ENCODE measurements at regions of chr17 and their contacts with region 1.

Region 1: GRCh38 chr17:7627250-7628121 is at the start of gene SAT2:
- DNase-seq: peak in 1 of 2 donors; percentile 98
- H3K4me3 ChIP-seq: peak within 1 kb of the TSS; percentile 83 to 98
- H3K27ac ChIP-seq: peak within 1 kb of the TSS; percentile 93
- H3K4me1 ChIP-seq: peaks cover 9% of the 10 kb centered on the region
- H3K27me3 ChIP-seq: no peaks in the 10 kb centered on the region
- CTCF ChIP-seq: no peak
- POLR2A ChIP-seq: peak in 1 of 2 donors; percentile 77
- total RNA-seq, gene SAT2: 69.7 TPM

Region 2: GRCh38 chr17:7687908-7688807 is 60.7 kb after region 1 on chr17 and contains the start of gene WRAP53:
- intact Hi-C with region 1: loop called (anchors 2 kb)
- DNase-seq: peak in 1 of 2 donors; percentile 99
- H3K4me3 ChIP-seq: peak within 1 kb of the TSS; percentile 73 to 83
- H3K27ac ChIP-seq: peak within 1 kb of the TSS; percentile 95
- H3K4me1 ChIP-seq: peaks cover 36% of the 10 kb centered on the region
- H3K27me3 ChIP-seq: no peaks in the 10 kb centered on the region
- CTCF ChIP-seq: peak; percentile 92 to 98 (median 92)
- POLR2A ChIP-seq: no peak
- total RNA-seq, gene WRAP53: 7.6 TPM

Region 3: DNA sequence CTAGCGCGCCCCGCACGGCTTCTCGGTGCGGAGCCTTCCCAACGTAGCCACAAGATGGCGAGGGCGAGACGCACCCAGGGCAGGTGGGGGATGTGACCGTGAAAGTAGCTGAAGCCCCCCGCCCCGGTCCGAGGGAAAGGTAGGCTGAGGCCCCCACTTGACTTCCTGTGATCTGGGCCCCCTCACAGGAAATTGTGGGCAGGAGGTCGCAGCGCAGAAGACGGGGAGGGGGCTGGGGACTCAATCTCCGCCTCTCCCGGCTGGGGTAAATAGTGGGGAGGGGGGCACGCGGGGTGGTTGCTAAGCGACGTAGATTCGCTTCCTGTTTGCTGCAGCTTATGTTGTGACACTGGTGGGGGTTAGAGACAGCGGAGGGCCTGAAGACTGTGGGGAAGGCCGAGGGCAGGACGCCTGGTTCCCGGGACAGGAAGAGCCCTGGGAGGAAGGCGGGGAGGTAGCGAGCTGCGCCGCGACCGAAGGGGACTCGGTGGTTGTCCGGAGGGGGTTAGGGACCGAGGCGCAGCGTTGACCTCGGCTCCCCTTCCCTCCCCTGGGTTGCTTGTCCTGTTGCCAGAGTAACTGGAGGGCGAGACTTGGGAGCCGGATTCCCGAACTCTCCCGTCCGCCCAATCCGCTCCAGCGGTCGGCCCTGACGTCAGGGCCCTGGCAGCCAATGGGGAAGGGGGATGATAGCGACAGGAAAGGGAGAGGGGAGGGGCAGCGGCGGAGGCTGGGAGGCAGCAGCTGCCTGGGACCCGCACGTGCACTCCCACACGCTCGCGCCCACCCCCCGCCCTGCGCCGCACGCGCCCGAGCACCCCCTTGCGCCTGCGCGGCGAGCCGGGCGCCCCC is 207.7 kb after region 1 on chr17:
- intact Hi-C with region 1: loop called (anchors 5 kb)
- DNase-seq: peak in 1 of 2 donors; percentile 98
- H3K4me3 ChIP-seq: peak overlapping the region; percentile 70 to 95
- H3K27ac ChIP-seq: peak overlapping the region; percentile 99
- H3K4me1 ChIP-seq: peaks cover 46% of the 10 kb centered on the region
- H3K27me3 ChIP-seq: no peaks in the 10 kb centered on the region
- CTCF ChIP-seq: peak; percentile 41 to 87 (median 72)
- POLR2A ChIP-seq: peak in 1 of 2 donors; percentile 72